ENCODE measurements at regions of chr6 and their contacts with region 1.

Region 1: GRCh38 chr6:84428300-84428907 is 201.0 kb upstream of the CEP162 start:
- DNase-seq: no peak
- H3K4me3 ChIP-seq: no peak overlapping the region
- H3K27ac ChIP-seq: no peak overlapping the region
- H3K4me1 ChIP-seq: no peaks in the 10 kb centered on the region
- H3K27me3 ChIP-seq: peaks cover 0 to 25% (median 0%) of the 10 kb centered on the region in 4 donors
- CTCF ChIP-seq: peak in 5 of 6 experiments; percentile 39 to 60 (median 52)
- POLR2A ChIP-seq: no peak

Region 2: GRCh38 chr6:84243240-84243639 is 185.2 kb before region 1 on chr6:
- intact Hi-C with region 1: no loop called
- DNase-seq: no peak
- H3K4me3 ChIP-seq: no peak overlapping the region
- H3K27ac ChIP-seq: no peak overlapping the region
- H3K4me1 ChIP-seq: no peaks in the 10 kb centered on the region
- H3K27me3 ChIP-seq: no peaks in the 10 kb centered on the region
- CTCF ChIP-seq: no peak
- POLR2A ChIP-seq: no peak

Region 3: GRCh38 chr6:84392261-84392660 is 36.1 kb before region 1 on chr6:
- intact Hi-C with region 1: no loop called
- DNase-seq: no peak
- H3K4me3 ChIP-seq: no peak overlapping the region
- H3K27ac ChIP-seq: no peak overlapping the region
- H3K4me1 ChIP-seq: no peaks in the 10 kb centered on the region
- H3K27me3 ChIP-seq: no peaks in the 10 kb centered on the region
- CTCF ChIP-seq: no peak
- POLR2A ChIP-seq: no peak

Region 4: DNA sequence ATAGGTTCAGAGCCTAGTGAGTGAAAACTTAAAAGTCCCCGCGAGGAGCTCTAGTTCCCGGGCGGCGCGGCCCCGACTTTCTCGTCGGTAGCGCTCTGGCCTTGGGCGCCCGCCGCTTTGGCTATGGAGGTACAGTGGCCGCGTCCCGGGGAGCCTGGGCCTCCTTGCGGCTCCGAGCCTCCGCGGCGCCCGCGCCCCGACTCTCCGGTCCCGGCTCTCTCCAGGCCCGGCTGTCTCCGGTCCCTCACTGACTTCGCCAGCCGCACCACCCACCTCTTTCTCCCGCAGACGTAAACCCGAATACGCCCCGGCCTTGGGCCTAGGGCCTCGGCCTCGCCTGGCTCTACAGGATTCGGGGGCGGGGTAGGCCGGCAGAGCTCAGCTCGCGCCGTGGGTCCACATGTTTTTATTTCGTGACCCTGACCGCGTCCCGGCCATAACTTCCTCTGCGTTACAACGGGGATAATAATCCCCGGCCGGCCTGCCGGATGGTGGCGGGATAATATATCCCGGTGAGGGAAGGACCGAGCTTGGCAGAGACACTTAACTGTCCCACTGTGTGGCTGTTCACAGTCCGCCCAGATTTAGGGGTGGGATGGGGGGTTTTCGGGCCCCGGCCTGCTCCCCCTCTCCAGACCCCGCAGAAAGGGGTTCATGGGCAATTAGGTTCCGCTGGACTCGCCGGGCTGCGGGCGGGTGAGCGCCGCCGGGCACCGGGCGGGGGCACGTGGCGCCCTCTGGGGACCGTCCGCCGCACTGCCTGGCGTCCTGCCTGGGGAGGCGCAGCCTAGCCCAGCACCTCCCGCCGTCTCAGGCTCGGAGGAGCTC is 346.0 kb after region 1 on chr6:
- intact Hi-C with region 1: loop called (anchors 10 kb)
- DNase-seq: no peak
- H3K4me3 ChIP-seq: peak overlapping the region; percentile 20 to 61 (median 39)
- H3K27ac ChIP-seq: peak overlapping the region in 1 of 4 donors; percentile 17
- H3K4me1 ChIP-seq: peaks cover 3 to 20% (median 9%) of the 10 kb centered on the region in 3 donors
- H3K27me3 ChIP-seq: peaks cover 19 to 100% (median 37%) of the 10 kb centered on the region in 4 donors
- CTCF ChIP-seq: peak in 5 of 6 experiments; percentile 16 to 42 (median 38)
- POLR2A ChIP-seq: no peak